ENCODE measurements at regions of chr11 and their contacts with region 1.

Region 1: GRCh38 chr11:62621567-62622470 is at the start of gene B3GAT3:
- DNase-seq: peak; percentile 95 to 99 (median 96)
- H3K4me3 ChIP-seq: peak within 1 kb of the TSS; percentile 83 to 89
- H3K4me3 Mint-ChIP-seq: peak within 1 kb of the TSS; percentile 89 to 98 (median 95)
- H3K27ac ChIP-seq: peak within 1 kb of the TSS; percentile 94
- H3K27ac Mint-ChIP-seq: peak within 1 kb of the TSS; percentile 91 to 99 (median 98)
- H3K4me1 ChIP-seq: peaks cover 26% of the 10 kb centered on the region
- H3K4me1 Mint-ChIP-seq: peaks cover 19 to 29% (median 20%) of the 10 kb centered on the region in 4 donors
- H3K27me3 ChIP-seq: no peaks in the 10 kb centered on the region
- H3K27me3 Mint-ChIP-seq: no peaks in the 10 kb centered on the region
- total RNA-seq, gene B3GAT3: 66.3 to 74.3 TPM

Region 2: DNA sequence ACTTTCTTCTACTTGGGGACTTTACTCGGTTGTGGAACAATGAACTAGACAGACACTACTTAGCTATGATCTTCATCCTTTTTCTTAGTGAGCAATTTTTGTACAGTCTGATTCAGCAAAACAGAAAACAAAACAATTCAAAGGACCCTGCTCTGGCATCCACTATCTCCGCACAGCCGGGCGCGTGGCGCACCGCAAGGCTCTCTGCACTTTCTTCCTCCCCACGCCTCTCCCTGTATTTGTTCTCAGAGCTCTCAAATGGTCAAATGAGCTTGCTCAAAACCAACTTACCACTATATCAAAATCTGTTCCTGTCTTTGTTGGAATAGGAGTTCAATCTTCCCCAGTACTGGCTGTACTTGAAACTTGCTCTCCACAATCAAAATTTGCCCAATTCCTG is 55.6 kb before region 1 on chr11:
- CTCF ChIA-PET with region 1: no interaction called
- POLR2A ChIA-PET with region 1: no interaction called
- intact Hi-C with region 1: no loop called
- DNase-seq: no peak
- H3K4me3 ChIP-seq: no peak overlapping the region
- H3K4me3 Mint-ChIP-seq: peak overlapping the region in 1 of 8 donors; percentile 31
- H3K27ac ChIP-seq: no peak overlapping the region
- H3K27ac Mint-ChIP-seq: peak overlapping the region in 5 of 7 donors; percentile 38 to 84 (median 49)
- H3K4me1 ChIP-seq: peaks cover 29% of the 10 kb centered on the region
- H3K4me1 Mint-ChIP-seq: peaks cover 25 to 49% (median 33%) of the 10 kb centered on the region in 4 donors
- H3K27me3 ChIP-seq: no peaks in the 10 kb centered on the region
- H3K27me3 Mint-ChIP-seq: no peaks in the 10 kb centered on the region

Region 3: GRCh38 chr11:62601394-62602140 is 20.3 kb before region 1 on chr11 and contains the start of gene MTA2:
- CTCF ChIA-PET with region 1: interaction called, 3 read pairs
- POLR2A ChIA-PET with region 1: interaction called, 114 read pairs
- intact Hi-C with region 1: no loop called
- DNase-seq: peak; percentile 99 to 100 (median 100)
- H3K4me3 ChIP-seq: peak within 1 kb of the TSS; percentile 71 to 82
- H3K4me3 Mint-ChIP-seq: peak within 1 kb of the TSS; percentile 91 to 99 (median 96)
- H3K27ac ChIP-seq: peak within 1 kb of the TSS; percentile 91
- H3K27ac Mint-ChIP-seq: peak within 1 kb of the TSS; percentile 90 to 99 (median 98)
- H3K4me1 ChIP-seq: peaks cover 35% of the 10 kb centered on the region
- H3K4me1 Mint-ChIP-seq: peaks cover 33 to 60% (median 46%) of the 10 kb centered on the region in 4 donors
- H3K27me3 ChIP-seq: no peaks in the 10 kb centered on the region
- H3K27me3 Mint-ChIP-seq: no peaks in the 10 kb centered on the region
- total RNA-seq, gene MTA2: 207 to 210 TPM

Region 4: GRCh38 chr11:62671575-62672389 is 50.0 kb after region 1 on chr11 and contains the starts of genes LBHD1 and UQCC3:
- CTCF ChIA-PET with region 1: interaction called, 4 read pairs
- POLR2A ChIA-PET with region 1: interaction called, 53 read pairs
- intact Hi-C with region 1: no loop called
- DNase-seq: peak; percentile 68 to 80 (median 75)
- H3K4me3 ChIP-seq: peak within 1 kb of the TSS; percentile 91 to 97
- H3K4me3 Mint-ChIP-seq: peak within 1 kb of the TSS; percentile 93 to 99 (median 99)
- H3K27ac ChIP-seq: peak within 1 kb of the TSS; percentile 74
- H3K27ac Mint-ChIP-seq: peak within 1 kb of the TSS; percentile 89 to 98 (median 97)
- H3K4me1 ChIP-seq: peaks cover 55% of the 10 kb centered on the region
- H3K4me1 Mint-ChIP-seq: peaks cover 14 to 74% (median 43%) of the 10 kb centered on the region in 4 donors
- H3K27me3 ChIP-seq: no peaks in the 10 kb centered on the region
- H3K27me3 Mint-ChIP-seq: no peaks in the 10 kb centered on the region
- total RNA-seq, gene LBHD1: 26.7 to 28.6 TPM
- total RNA-seq, gene UQCC3: 7.2 to 8.5 TPM

Measured in CD4-positive, alpha-beta memory T cell (primary cell).